ENCODE measurements at regions of chr6 and their contacts with region 1.

Region 1: DNA sequence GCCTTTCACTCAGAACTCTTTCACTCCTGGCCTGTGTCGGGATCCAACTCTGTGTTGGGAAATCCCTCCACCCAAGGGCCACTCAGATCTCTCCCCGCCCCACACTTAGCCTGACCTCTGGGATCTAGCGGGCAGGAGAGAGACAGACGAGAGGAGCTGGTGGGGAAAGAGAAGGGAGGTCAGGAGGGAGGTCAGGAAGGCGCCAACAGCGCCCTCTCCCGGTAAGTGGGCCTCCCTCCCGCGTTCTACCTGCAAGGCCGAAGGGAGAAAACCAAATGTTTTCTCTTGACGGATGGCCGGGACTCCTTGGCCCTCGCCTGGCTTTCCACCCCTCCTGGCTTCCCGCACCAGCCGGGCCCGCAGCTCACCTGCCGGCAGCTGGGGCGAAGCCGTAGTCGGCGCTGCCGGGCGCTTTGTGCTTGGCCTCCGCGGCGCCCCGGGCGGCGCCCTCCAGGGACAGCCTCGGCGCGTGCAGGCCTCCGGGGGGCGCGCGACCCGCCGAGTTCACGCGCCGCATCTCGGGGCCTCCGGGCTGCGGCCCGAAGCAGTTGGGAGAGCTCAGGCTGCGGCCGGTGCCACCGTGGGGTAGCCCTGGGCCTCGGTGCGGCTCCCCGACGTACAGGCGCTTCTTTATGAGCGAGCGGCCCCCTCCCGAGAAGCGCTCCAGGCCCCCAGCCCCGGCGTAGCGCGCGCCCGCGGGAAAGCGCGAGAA is 38.2 kb downstream of the C6orf132 start:
- DNase-seq: peak; percentile 70 to 81 (median 79)
- H3K4me3 ChIP-seq: peak overlapping the region in 6 of 7 experiments; percentile 50 to 79 (median 68)
- H3K27ac ChIP-seq: peak overlapping the region in 1 of 2 experiments; percentile 64
- H3K4me1 ChIP-seq: peaks cover 0 to 16% (median 12%) of the 10 kb centered on the region in 4 experiments
- H3K27me3 ChIP-seq: no peaks in the 10 kb centered on the region

Region 2: GRCh38 chr6:42075159-42075838 is 29.0 kb before region 1 on chr6:
- CTCF ChIA-PET with region 1: interaction called, 13 read pairs
- POLR2A ChIA-PET with region 1: no interaction called
- DNase-seq: peak; percentile 60 to 78 (median 68)
- H3K4me3 ChIP-seq: no peak overlapping the region
- H3K27ac ChIP-seq: no peak overlapping the region
- H3K4me1 ChIP-seq: no peaks in the 10 kb centered on the region
- H3K27me3 ChIP-seq: no peaks in the 10 kb centered on the region

Region 3: GRCh38 chr6:42083530-42083929 is 20.7 kb before region 1 on chr6:
- CTCF ChIA-PET with region 1: interaction called, 13 read pairs
- POLR2A ChIA-PET with region 1: no interaction called
- DNase-seq: no peak
- H3K4me3 ChIP-seq: no peak overlapping the region
- H3K27ac ChIP-seq: no peak overlapping the region
- H3K4me1 ChIP-seq: no peaks in the 10 kb centered on the region
- H3K27me3 ChIP-seq: no peaks in the 10 kb centered on the region

Region 4: GRCh38 chr6:42093582-42094329 is 10.5 kb before region 1 on chr6:
- CTCF ChIA-PET with region 1: interaction called, 51 read pairs
- POLR2A ChIA-PET with region 1: interaction called, 11 read pairs
- DNase-seq: no peak
- H3K4me3 ChIP-seq: no peak overlapping the region
- H3K27ac ChIP-seq: no peak overlapping the region
- H3K4me1 ChIP-seq: peaks cover 0 to 2% (median 0%) of the 10 kb centered on the region in 4 experiments
- H3K27me3 ChIP-seq: no peaks in the 10 kb centered on the region

Region 5: DNA sequence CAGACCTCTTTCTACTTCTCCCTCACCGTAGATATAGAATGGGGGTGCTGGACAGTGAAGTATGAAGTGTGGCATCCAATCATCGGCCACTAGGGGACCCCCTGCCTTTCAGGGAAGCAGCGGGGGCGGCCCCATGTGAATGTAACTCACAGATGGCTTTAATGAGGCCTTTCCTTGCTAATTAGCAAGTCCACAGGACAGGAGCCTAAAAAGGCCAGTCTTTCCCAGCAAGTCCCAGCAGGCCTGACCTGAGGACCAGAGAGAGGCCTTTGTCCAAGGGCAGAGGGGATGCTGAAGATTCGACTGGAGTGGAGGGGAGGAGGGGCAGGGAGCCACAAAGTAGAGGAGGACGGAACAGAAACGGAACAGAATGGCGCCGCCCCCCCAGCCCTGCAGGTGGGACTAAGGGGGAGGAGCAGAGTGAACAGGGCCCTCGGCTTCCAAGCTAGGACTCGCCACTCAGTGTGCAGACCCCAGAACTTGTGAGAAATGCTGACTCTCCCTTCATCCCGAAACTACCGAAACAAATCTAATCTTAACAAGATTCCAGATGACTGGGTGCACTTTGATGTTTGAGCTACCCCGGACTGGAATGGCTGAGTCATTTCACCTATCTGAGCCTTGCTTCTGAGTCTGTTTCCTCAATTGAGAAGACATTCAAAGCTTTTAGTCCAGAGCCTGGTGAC is 32.4 kb after region 1 on chr6:
- CTCF ChIA-PET with region 1: interaction called, 23 read pairs
- POLR2A ChIA-PET with region 1: no interaction called
- DNase-seq: peak; percentile 79 to 93 (median 91)
- H3K4me3 ChIP-seq: peak overlapping the region in 6 of 7 experiments; percentile 19 to 71 (median 36)
- H3K27ac ChIP-seq: peak overlapping the region in 1 of 2 experiments; percentile 62
- H3K4me1 ChIP-seq: peaks cover 0 to 27% (median 21%) of the 10 kb centered on the region in 4 experiments
- H3K27me3 ChIP-seq: peaks cover 0 to 6% (median 1%) of the 10 kb centered on the region in 5 experiments

Region 6: GRCh38 chr6:42166444-42167141 is 62.3 kb after region 1 on chr6:
- CTCF ChIA-PET with region 1: interaction called, 10 read pairs
- POLR2A ChIA-PET with region 1: no interaction called
- DNase-seq: peak; percentile 65 to 82 (median 70)
- H3K4me3 ChIP-seq: no peak overlapping the region
- H3K27ac ChIP-seq: no peak overlapping the region
- H3K4me1 ChIP-seq: no peaks in the 10 kb centered on the region
- H3K27me3 ChIP-seq: no peaks in the 10 kb centered on the region

Region 7: DNA sequence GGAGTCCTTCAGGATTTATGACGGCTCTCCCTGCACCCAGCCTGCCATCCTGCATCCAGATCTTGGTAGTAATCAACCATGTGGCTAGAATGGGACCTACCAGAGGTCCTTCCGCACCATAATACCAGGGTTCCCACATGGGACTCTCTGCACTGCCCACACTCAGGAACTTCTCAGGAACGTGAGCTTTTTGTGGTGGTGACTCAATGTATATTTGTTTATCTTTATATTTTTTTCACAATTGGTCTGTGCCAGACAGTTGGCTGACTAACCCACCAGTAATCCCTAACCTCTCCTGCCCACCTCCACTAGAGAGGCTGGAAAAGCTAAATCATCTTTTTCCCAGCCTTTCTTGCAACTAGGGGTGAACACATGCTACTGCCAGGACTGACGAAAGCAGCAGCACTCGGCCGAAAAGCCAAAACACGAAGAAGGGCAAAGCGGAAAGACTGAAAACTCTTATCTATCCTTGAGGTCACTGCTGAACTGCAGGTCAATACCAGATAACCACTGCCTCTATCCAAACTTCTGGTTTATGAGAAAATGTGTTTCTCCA is 234.5 kb after region 1 on chr6:
- CTCF ChIA-PET with region 1: no interaction called
- POLR2A ChIA-PET with region 1: no interaction called
- DNase-seq: peak in 2 of 3 donors; percentile 12 to 21
- H3K4me3 ChIP-seq: no peak overlapping the region
- H3K27ac ChIP-seq: no peak overlapping the region
- H3K4me1 ChIP-seq: no peaks in the 10 kb centered on the region
- H3K27me3 ChIP-seq: no peaks in the 10 kb centered on the region